B cell (primary cell): ENCODE measurements at regions of chr19 and their contacts with region 1.

Region 1: GRCh38 chr19:47112997-47113849 is at the start of gene ZC3H4:
- DNase-seq: peak; percentile 99
- ATAC-seq: peak; percentile 76
- H3K4me3 ChIP-seq: peak within 1 kb of the TSS; percentile 85 to 99 (median 98)
- H3K4me3 Mint-ChIP-seq: peak within 1 kb of the TSS; percentile 88
- H3K27ac ChIP-seq: peak within 1 kb of the TSS; percentile 96 to 100
- H3K27ac Mint-ChIP-seq: peak within 1 kb of the TSS; percentile 99
- H3K4me1 ChIP-seq: peaks cover 25 to 30% of the 10 kb centered on the region in 2 donors
- H3K4me1 Mint-ChIP-seq: peaks cover 31% of the 10 kb centered on the region
- H3K27me3 ChIP-seq: no peaks in the 10 kb centered on the region
- H3K27me3 Mint-ChIP-seq: no peaks in the 10 kb centered on the region
- CTCF ChIP-seq: no peak
- total RNA-seq, gene ZC3H4: 66.9 and 73.7 TPM in 2 replicates

Region 2: GRCh38 chr19:46788262-46788967 is 324.8 kb before region 1 on chr19 and contains the start of gene SLC1A5:
- CTCF ChIA-PET with region 1: no interaction called
- POLR2A ChIA-PET with region 1: no interaction called
- intact Hi-C with region 1: loop called (anchors 2 kb)
- DNase-seq: peak; percentile 97
- ATAC-seq: peak; percentile 86
- H3K4me3 ChIP-seq: peak within 1 kb of the TSS; percentile 67 to 95 (median 79)
- H3K4me3 Mint-ChIP-seq: peak within 1 kb of the TSS; percentile 93
- H3K27ac ChIP-seq: peak within 1 kb of the TSS; percentile 40 to 47
- H3K27ac Mint-ChIP-seq: peak within 1 kb of the TSS; percentile 98
- H3K4me1 ChIP-seq: peaks cover 32 to 51% of the 10 kb centered on the region in 2 donors
- H3K4me1 Mint-ChIP-seq: peaks cover 52% of the 10 kb centered on the region
- H3K27me3 ChIP-seq: no peaks in the 10 kb centered on the region
- H3K27me3 Mint-ChIP-seq: no peaks in the 10 kb centered on the region
- CTCF ChIP-seq: no peak
- total RNA-seq, gene SLC1A5: 35.2 and 37.3 TPM in 2 replicates

Region 3: DNA sequence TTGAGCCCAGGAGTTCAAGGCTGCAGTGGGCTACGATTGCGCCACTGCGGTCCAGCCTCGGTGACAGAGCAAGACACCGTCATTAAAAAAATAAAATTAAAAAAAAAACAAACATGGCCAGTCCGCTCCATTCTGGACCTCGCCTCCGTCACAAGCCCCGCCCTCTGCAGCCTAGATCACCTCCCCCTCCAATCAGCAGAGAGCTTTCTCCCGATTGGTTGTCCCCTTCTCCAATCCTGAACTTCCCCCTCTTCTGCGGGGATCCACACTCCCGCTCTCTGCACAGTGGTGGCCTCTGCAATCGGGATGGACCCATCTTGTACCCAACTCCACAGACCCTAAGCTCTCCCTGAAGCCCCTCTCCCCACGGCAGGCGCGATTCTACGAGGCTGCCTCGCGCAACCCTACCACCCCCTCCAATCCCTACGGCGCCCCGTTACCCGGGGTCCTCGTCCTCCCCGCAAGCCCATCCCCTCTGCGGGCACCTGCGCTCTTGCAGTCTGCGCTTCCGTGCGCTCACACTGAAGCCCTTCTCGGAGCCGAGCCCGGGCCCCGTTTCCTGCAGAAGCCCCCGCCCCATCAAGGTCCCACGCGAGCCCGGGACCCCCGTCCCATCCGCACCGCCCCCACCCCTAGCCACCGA is 65.3 kb before region 1 on chr19:
- CTCF ChIA-PET with region 1: no interaction called
- POLR2A ChIA-PET with region 1: interaction called, 5 read pairs
- intact Hi-C with region 1: loop called (anchors 1 kb)
- DNase-seq: peak; percentile 78
- ATAC-seq: peak; percentile 19
- H3K4me3 ChIP-seq: peak overlapping the region; percentile 55 to 94 (median 84)
- H3K4me3 Mint-ChIP-seq: peak overlapping the region; percentile 96
- H3K27ac ChIP-seq: peak overlapping the region; percentile 8 to 74
- H3K27ac Mint-ChIP-seq: peak overlapping the region; percentile 90
- H3K4me1 ChIP-seq: peaks cover 6 to 17% of the 10 kb centered on the region in 2 donors
- H3K4me1 Mint-ChIP-seq: peaks cover 11% of the 10 kb centered on the region
- H3K27me3 ChIP-seq: no peaks in the 10 kb centered on the region
- H3K27me3 Mint-ChIP-seq: no peaks in the 10 kb centered on the region
- CTCF ChIP-seq: no peak

Region 4: DNA sequence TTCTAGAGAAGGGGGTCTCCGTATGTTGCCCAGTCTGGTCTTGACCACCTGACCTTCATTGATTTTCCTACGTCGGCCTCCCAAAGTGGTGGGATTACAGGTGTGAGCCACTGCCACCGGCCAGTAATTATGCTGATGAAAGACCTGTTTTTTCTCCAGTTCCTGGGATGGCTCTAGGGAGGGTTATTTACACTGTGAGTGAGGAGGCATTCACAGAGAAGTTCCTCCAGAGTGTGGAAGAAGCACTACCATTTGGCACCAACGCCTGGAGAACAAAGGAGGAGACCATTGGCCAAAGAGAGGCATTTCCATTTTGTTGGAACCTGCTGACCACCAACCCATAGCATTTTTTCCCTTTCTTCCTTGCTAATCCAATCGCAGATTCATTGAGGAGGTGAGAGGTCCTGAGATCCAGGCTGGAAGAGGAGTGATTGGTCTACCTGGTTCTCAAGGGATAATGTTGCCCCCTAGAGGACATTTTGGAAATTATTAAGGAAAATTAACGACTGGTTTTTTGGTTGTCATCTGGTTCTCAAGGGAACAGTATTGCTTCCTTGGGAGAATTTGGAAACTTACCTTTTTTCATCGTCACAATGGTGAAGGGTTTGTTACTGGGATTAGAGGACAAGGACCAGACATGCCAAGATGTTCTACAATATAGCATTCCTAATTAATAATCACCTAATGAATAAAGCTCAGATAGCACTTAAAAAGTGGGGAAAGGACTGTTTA is 11.9 kb after region 1 on chr19:
- CTCF ChIA-PET with region 1: interaction called, 29 read pairs
- POLR2A ChIA-PET with region 1: interaction called, 10 read pairs
- intact Hi-C with region 1: loop called (anchors 1 kb)
- DNase-seq: peak; percentile 80
- ATAC-seq: peak; percentile 70
- H3K4me3 ChIP-seq: no peak overlapping the region
- H3K4me3 Mint-ChIP-seq: no peak overlapping the region
- H3K27ac ChIP-seq: no peak overlapping the region
- H3K27ac Mint-ChIP-seq: no peak overlapping the region
- H3K4me1 ChIP-seq: peaks cover 0 to 1% of the 10 kb centered on the region in 2 donors
- H3K4me1 Mint-ChIP-seq: peaks cover 2% of the 10 kb centered on the region
- H3K27me3 ChIP-seq: no peaks in the 10 kb centered on the region
- H3K27me3 Mint-ChIP-seq: peaks cover 3% of the 10 kb centered on the region
- CTCF ChIP-seq: peak; percentile 81

Region 5: DNA sequence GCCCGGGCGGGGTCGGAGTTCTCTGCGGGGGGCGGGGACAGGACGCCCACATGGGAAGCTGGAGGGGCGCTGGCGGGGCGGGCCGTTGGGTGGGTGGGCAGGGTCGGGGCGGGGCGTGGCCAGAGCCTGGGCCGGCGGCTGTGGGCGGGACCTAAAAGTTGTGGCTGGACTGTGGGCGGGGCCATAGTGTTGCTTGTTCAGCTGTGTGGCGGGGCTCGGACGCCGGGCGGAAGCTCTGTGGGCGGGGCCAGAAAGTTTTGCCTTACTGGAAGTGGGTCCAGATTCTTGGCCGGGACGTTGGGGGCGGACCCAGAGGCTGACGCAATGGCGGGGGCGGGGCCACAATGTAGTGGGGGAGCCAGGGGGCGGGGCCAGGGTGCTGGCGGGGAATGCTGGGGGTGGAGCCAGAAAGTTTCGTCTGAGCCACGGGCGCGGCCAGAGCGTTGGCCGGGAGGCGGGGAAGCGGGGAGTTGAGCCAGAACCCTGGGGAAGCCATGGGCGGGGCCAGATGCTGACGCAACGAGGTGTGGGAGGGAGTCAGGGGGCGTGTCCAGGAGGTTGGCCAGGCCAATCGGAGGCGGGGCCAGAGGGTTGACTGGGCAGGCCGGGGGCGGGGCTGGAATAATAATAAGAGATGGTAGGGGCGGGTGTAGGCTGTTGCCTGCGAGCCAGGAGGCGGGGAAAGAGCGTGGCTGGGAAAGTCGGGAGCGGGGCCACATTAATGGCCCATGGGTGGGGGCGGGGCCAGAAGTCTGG is 143.6 kb after region 1 on chr19:
- CTCF ChIA-PET with region 1: interaction called, 4 read pairs
- POLR2A ChIA-PET with region 1: interaction called, 16 read pairs
- intact Hi-C with region 1: loop called (anchors 1 kb)
- DNase-seq: peak; percentile 98
- ATAC-seq: peak; percentile 77
- H3K4me3 ChIP-seq: peak overlapping the region; percentile 38 to 71 (median 62)
- H3K4me3 Mint-ChIP-seq: peak overlapping the region; percentile 92
- H3K27ac ChIP-seq: peak overlapping the region; percentile 73 to 94
- H3K27ac Mint-ChIP-seq: peak overlapping the region; percentile 95
- H3K4me1 ChIP-seq: peaks cover 14 to 20% of the 10 kb centered on the region in 2 donors
- H3K4me1 Mint-ChIP-seq: peaks cover 40% of the 10 kb centered on the region
- H3K27me3 ChIP-seq: no peaks in the 10 kb centered on the region
- H3K27me3 Mint-ChIP-seq: no peaks in the 10 kb centered on the region
- CTCF ChIP-seq: no peak

Region 6: DNA sequence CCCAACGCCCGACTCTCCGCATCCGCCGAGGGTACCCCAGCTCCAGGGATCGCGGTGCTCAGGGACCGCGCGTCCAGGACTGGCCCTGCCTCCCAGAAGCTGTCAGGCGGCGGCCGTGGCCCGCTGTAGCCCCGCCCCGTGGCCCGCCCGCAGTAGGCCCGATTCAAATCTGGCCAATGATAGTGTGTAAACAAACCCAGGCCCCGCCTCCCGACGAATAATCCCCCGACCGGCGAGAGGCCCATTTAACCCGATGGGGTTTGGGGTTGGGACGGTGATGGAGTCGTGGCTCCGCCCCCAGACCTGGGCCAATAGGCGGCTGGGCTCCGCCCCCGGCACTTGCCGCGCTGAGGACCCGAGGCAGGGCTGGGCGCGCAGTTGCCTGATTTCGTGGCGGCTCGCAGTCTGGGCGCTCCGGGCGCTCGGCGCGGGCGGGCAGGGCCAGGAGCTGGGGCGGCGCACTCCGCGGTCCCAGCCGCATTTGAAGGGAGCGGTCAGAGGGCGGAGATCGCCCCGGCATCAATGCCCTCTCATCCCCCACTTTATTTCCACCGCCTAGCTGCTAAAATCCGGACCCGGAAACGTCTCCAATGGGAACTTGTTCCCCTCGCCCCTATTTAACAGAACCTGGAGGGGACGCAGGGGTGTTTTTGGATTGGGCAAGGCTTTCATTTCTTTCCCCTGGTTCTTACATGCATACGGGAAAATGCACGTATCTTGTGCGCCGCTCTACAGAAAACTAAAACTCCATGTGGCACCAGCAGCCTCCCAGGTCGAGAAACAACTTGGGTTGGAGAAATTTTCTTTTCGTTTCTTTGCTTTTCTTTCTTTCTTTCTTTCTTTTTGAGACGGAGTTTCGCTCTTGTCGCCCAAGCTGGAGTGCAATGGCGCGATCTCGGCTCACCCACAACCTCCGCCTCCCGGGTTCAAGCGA is 487.3 kb after region 1 on chr19:
- CTCF ChIA-PET with region 1: no interaction called
- POLR2A ChIA-PET with region 1: no interaction called
- intact Hi-C with region 1: loop called (anchors 10 kb)
- DNase-seq: peak; percentile 99
- ATAC-seq: peak; percentile 96
- H3K4me3 ChIP-seq: peak overlapping the region; percentile 63 to 79 (median 71)
- H3K4me3 Mint-ChIP-seq: peak overlapping the region; percentile 80
- H3K27ac ChIP-seq: peak overlapping the region; percentile 62 to 83
- H3K27ac Mint-ChIP-seq: peak overlapping the region; percentile 70
- H3K4me1 ChIP-seq: peaks cover 12 to 18% of the 10 kb centered on the region in 2 donors
- H3K4me1 Mint-ChIP-seq: peaks cover 11% of the 10 kb centered on the region
- H3K27me3 ChIP-seq: peaks cover 0 to 28% (median 3%) of the 10 kb centered on the region in 4 experiments
- H3K27me3 Mint-ChIP-seq: peaks cover 21% of the 10 kb centered on the region
- CTCF ChIP-seq: no peak